Activated T-helper 1 cell treated with anti-CD3 and anti-CD28 coated beads, Interleukin-12 subunit alpha, Interleukin-12 subunit beta, Interleukin-2, Interleukin-4 antibody, amounts not matched to agents 30 ng/mL and 10 ng/mL and 1 ng/mL, durations not matched to agents 14 hours and 24 hours and 36 hours (primary cell): ENCODE measurements at regions of chr3 and their contacts with region 1.

Region 1: GRCh38 chr3:49673715-49674496 is at the start of gene APEH:
- DNase-seq: peak; percentile 96
- H3K4me3 Mint-ChIP-seq: peak within 1 kb of the TSS; percentile 87
- H3K27ac Mint-ChIP-seq: peak within 1 kb of the TSS; percentile 96
- H3K4me1 Mint-ChIP-seq: peaks cover 19% of the 10 kb centered on the region
- H3K27me3 Mint-ChIP-seq: no peaks in the 10 kb centered on the region
- total RNA-seq, gene APEH: 113 and 115 TPM in 2 replicates

Region 2: GRCh38 chr3:49028673-49029562 is 645.0 kb before region 1 on chr3 and contains the start of gene IMPDH2:
- intact Hi-C with region 1: loop called (anchors 5 kb)
- DNase-seq: peak; percentile 92
- H3K4me3 Mint-ChIP-seq: peak within 1 kb of the TSS; percentile 93
- H3K27ac Mint-ChIP-seq: peak within 1 kb of the TSS; percentile 90
- H3K4me1 Mint-ChIP-seq: peaks cover 50% of the 10 kb centered on the region
- H3K27me3 Mint-ChIP-seq: no peaks in the 10 kb centered on the region
- total RNA-seq, gene IMPDH2: 423 and 434 TPM in 2 replicates

Region 3: DNA sequence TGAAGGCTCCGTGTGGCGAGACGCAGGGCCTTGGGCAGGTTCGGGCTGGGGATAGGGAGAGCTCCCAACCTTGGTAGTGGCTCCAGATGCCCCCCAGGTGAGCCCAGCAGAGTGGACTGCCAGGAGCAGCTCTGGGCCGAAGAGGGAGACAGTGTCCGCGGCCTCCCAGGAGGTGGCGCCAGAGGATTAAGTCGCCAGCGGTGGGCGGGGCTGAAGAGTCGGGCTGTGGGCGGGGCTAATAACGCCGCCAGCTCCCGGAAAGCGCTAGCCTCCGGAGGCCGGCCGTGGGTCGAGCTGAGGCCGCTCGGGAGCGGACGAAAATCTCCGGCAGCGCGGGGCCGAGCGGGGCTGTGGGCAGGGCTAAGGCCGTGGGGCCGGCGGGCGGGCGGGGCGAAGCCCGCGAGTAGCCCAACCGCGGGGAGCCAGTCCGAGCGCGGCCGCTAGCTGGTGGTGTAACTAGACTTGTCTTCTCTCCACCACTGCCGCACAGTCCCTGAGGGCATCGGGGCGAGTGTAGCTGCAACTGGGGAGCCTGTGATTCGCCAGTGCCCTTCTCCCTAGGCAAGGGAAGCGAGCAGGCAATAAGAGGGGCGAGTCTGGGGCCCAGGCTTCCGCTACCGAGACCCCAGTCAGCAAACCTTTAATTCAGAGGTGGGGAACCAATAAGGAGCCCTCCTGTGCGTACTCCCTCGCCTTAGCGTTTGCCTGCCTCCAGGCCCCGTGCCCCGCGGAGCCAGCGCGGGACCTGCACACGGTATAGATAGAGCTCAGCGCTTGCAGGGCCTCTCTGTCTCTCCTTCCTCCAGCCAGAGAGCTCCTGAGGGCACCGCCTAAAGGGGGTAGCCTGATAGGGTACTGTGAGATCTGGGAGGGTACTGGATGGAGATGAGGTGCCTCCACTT is 134.0 kb before region 1 on chr3:
- intact Hi-C with region 1: loop called (anchors 1 kb)
- DNase-seq: peak; percentile 85
- H3K4me3 Mint-ChIP-seq: peak overlapping the region; percentile 68
- H3K27ac Mint-ChIP-seq: no peak overlapping the region
- H3K4me1 Mint-ChIP-seq: peaks cover 5% of the 10 kb centered on the region
- H3K27me3 Mint-ChIP-seq: peaks cover 12% of the 10 kb centered on the region

Region 4: GRCh38 chr3:49566312-49566711 is 107.6 kb before region 1 on chr3:
- intact Hi-C with region 1: loop called (anchors 1 kb)
- DNase-seq: no peak
- H3K4me3 Mint-ChIP-seq: no peak overlapping the region
- H3K27ac Mint-ChIP-seq: no peak overlapping the region
- H3K4me1 Mint-ChIP-seq: no peaks in the 10 kb centered on the region
- H3K27me3 Mint-ChIP-seq: peaks cover 22% of the 10 kb centered on the region

Region 5: DNA sequence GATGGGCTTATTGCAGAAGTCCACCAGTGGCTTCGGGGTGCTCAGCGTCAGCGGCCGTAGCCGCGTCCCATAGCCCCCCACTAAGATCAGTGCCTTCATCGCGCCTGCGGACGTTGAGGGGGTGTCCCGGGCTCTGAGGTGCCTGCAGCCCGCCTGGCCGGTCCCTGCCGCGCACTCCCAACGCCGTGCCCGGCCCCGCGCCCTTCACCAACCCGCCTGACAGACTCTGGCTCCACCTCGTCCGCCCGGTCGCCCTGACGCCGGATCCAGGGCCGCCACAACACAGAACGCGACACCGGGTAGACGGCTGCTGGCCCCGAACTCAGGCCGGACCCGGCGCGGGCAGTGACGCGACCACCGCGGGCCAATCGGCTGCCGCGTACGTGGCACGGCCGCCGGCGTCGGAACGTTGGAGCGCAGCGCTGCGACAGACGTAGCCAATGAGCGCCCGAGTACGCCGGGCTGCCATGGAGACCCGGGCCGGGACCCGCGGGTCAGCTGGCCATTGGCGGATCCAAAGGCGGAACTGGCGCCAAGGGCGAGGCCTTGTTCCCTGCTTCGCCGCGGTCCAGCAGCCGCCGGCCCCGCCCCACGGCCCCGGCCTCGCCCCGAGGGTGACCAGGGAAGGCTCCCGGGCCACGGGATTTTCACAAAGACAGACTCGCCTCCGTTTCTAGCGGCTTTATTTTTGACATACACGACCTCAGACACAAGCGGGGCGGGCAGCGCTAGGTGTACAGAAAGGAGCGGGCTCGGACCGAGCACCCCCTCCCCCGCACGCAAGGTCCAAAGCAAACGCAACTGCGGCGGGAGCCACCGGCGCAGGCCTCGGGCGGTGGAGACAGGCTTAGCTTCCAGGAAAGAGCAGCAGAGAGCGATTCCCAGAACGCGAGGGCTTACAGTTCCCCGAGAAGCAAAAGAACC is 50.0 kb after region 1 on chr3 and contains the start of gene GMPPB:
- intact Hi-C with region 1: loop called (anchors 1 kb)
- DNase-seq: peak; percentile 95
- H3K4me3 Mint-ChIP-seq: peak within 1 kb of the TSS; percentile 95
- H3K27ac Mint-ChIP-seq: peak within 1 kb of the TSS; percentile 95
- H3K4me1 Mint-ChIP-seq: peaks cover 34% of the 10 kb centered on the region
- H3K27me3 Mint-ChIP-seq: no peaks in the 10 kb centered on the region
- total RNA-seq, gene GMPPB: 49.1 and 49.2 TPM in 2 replicates

Region 6: GRCh38 chr3:49939858-49940666 is 266.2 kb after region 1 on chr3 and contains the start of gene RBM6:
- intact Hi-C with region 1: loop called (anchors 1 kb)
- DNase-seq: peak; percentile 95
- H3K4me3 Mint-ChIP-seq: peak within 1 kb of the TSS; percentile 97
- H3K27ac Mint-ChIP-seq: peak within 1 kb of the TSS; percentile 98
- H3K4me1 Mint-ChIP-seq: peaks cover 22% of the 10 kb centered on the region
- H3K27me3 Mint-ChIP-seq: no peaks in the 10 kb centered on the region
- total RNA-seq, gene RBM6: 99.0 and 100 TPM in 2 replicates